B cell (primary cell): ENCODE measurements at regions of chr21 and their contacts with region 1.

Region 1: GRCh38 chr21:37563641-37564340 is 197.2 kb downstream of the DYRK1A start:
- DNase-seq: peak; percentile 94
- ATAC-seq: peak; percentile 92
- H3K4me3 ChIP-seq: peak overlapping the region; percentile 61 to 91 (median 82)
- H3K4me3 Mint-ChIP-seq: peak overlapping the region; percentile 97
- H3K27ac ChIP-seq: peak overlapping the region; percentile 70 to 88
- H3K27ac Mint-ChIP-seq: peak overlapping the region; percentile 97
- H3K4me1 ChIP-seq: peaks cover 10 to 19% of the 10 kb centered on the region in 2 donors
- H3K4me1 Mint-ChIP-seq: peaks cover 18% of the 10 kb centered on the region
- H3K27me3 ChIP-seq: no peaks in the 10 kb centered on the region
- H3K27me3 Mint-ChIP-seq: peaks cover 3% of the 10 kb centered on the region
- CTCF ChIP-seq: peak; percentile 61

Region 2: DNA sequence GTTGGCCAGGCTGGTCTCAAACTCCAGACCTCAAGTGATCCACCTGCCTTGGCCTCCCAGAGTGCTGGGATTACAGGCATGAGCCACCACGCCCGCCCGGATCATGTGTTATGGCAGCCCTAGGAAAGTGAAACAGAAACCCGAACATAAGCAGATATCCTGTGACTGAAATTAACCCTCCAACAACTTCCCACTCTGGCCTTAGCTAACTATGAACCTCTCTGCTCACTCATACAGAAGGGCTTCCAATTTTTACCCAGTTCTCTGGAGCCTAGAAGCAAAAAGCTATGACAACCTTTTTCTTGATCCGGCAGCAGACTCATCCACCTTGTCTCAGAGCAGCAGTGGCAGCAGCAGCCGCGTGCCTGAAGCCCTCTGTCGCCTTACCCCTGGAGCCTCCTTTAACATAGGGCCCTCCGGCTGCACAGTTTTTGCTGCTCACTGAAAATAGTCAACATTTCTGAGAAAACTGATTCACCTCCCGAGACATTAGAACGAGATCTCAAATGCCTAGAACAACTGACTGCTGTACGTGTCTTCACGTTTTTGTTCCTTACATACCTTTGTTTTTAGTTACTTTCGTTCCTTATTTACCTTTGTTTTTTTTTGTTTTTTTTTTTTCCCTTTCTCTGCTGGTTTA is 1484.7 kb before region 1 on chr21:
- CTCF ChIA-PET with region 1: no interaction called
- POLR2A ChIA-PET with region 1: no interaction called
- intact Hi-C with region 1: no loop called
- DNase-seq: peak; percentile 61
- ATAC-seq: peak; percentile 79
- H3K4me3 ChIP-seq: peak overlapping the region in 1 of 5 experiments; percentile 20
- H3K4me3 Mint-ChIP-seq: peak overlapping the region; percentile 64
- H3K27ac ChIP-seq: peak overlapping the region; percentile 35 to 51
- H3K27ac Mint-ChIP-seq: peak overlapping the region; percentile 90
- H3K4me1 ChIP-seq: peaks cover 26 to 29% of the 10 kb centered on the region in 2 donors
- H3K4me1 Mint-ChIP-seq: peaks cover 37% of the 10 kb centered on the region
- H3K27me3 ChIP-seq: no peaks in the 10 kb centered on the region
- H3K27me3 Mint-ChIP-seq: no peaks in the 10 kb centered on the region
- CTCF ChIP-seq: no peak

Region 3: GRCh38 chr21:37072988-37073416 is 490.8 kb before region 1 on chr21 and contains the starts of genes PIGP and TTC3:
- CTCF ChIA-PET with region 1: no interaction called
- POLR2A ChIA-PET with region 1: no interaction called
- intact Hi-C with region 1: loop called (anchors 2 kb)
- DNase-seq: peak; percentile 98
- ATAC-seq: peak; percentile 67
- H3K4me3 ChIP-seq: peak within 1 kb of the TSS; percentile 80 to 92 (median 86)
- H3K4me3 Mint-ChIP-seq: peak within 1 kb of the TSS; percentile 98
- H3K27ac ChIP-seq: peak within 1 kb of the TSS; percentile 98
- H3K27ac Mint-ChIP-seq: peak within 1 kb of the TSS; percentile 99
- H3K4me1 ChIP-seq: peaks cover 22 to 23% of the 10 kb centered on the region in 2 donors
- H3K4me1 Mint-ChIP-seq: peaks cover 46% of the 10 kb centered on the region
- H3K27me3 ChIP-seq: no peaks in the 10 kb centered on the region
- H3K27me3 Mint-ChIP-seq: no peaks in the 10 kb centered on the region
- CTCF ChIP-seq: no peak
- total RNA-seq, gene PIGP: 21.7 and 22.7 TPM in 2 replicates
- total RNA-seq, gene TTC3: 163 and 191 TPM in 2 replicates

Region 4: DNA sequence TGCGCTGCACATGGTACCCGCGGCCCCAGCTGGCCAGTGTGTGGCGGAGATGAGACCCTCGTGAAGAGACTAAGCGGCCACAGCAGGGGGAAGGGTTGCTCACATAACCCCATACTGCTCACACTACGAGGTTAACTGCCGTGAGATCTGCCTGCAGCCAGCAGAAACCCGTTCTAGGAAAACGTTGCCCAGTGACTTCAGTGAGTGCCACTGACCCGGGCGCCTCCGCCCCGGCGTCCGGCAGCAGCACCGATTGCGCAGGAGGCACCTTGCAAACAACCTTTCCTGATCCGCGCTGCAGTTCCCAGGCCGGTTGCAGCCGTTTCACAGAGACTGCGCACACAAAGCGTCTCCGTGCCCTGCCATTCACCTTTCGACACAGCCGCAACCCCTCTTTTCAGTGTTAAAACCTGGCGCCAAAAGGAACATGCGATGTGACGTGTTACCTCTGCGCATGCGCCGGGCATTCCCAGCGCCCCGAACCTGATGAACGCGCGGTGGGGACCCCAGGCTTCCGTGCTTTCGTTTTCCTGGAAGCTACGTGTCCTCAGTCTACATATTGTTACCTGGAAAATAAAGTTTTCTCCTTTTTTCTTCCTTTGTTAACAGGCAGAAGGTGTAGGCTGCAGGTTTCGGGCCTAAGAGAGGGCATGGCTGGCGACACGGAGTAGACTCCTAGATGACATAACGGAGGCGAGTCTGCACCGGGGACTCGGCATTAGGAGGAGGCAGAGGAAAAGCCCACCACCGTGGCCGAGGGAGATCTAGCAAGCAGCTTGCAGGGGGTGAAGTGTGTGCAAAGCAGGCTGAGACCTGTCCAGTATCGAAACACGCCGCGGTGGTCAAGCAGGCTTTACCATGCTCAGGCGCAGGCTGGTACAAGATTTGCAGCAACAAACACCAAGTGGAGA is 305.6 kb before region 1 on chr21:
- CTCF ChIA-PET with region 1: no interaction called
- POLR2A ChIA-PET with region 1: no interaction called
- intact Hi-C with region 1: loop called (anchors 2 kb)
- DNase-seq: peak; percentile 86
- ATAC-seq: peak; percentile 56
- H3K4me3 ChIP-seq: peak overlapping the region; percentile 59 to 85 (median 72)
- H3K4me3 Mint-ChIP-seq: peak overlapping the region; percentile 86
- H3K27ac ChIP-seq: peak overlapping the region; percentile 9 to 78
- H3K27ac Mint-ChIP-seq: peak overlapping the region; percentile 57
- H3K4me1 ChIP-seq: peaks cover 12 to 22% of the 10 kb centered on the region in 2 donors
- H3K4me1 Mint-ChIP-seq: peaks cover 31% of the 10 kb centered on the region
- H3K27me3 ChIP-seq: no peaks in the 10 kb centered on the region
- H3K27me3 Mint-ChIP-seq: no peaks in the 10 kb centered on the region
- CTCF ChIP-seq: no peak

Region 5: GRCh38 chr21:37509802-37510393 is 53.9 kb before region 1 on chr21:
- CTCF ChIA-PET with region 1: no interaction called
- POLR2A ChIA-PET with region 1: no interaction called
- intact Hi-C with region 1: loop called (anchors 10 kb)
- DNase-seq: no peak
- ATAC-seq: no peak
- H3K4me3 ChIP-seq: no peak overlapping the region
- H3K4me3 Mint-ChIP-seq: no peak overlapping the region
- H3K27ac ChIP-seq: no peak overlapping the region
- H3K27ac Mint-ChIP-seq: no peak overlapping the region
- H3K4me1 ChIP-seq: no peaks in the 10 kb centered on the region
- H3K4me1 Mint-ChIP-seq: peaks cover 19% of the 10 kb centered on the region
- H3K27me3 ChIP-seq: no peaks in the 10 kb centered on the region
- H3K27me3 Mint-ChIP-seq: no peaks in the 10 kb centered on the region
- CTCF ChIP-seq: no peak

Region 6: GRCh38 chr21:37711836-37712568 is 148.2 kb after region 1 on chr21:
- CTCF ChIA-PET with region 1: no interaction called
- POLR2A ChIA-PET with region 1: no interaction called
- intact Hi-C with region 1: no loop called
- DNase-seq: peak; percentile 35
- ATAC-seq: peak; percentile 56
- H3K4me3 ChIP-seq: no peak overlapping the region
- H3K4me3 Mint-ChIP-seq: no peak overlapping the region
- H3K27ac ChIP-seq: no peak overlapping the region
- H3K27ac Mint-ChIP-seq: no peak overlapping the region
- H3K4me1 ChIP-seq: no peaks in the 10 kb centered on the region
- H3K4me1 Mint-ChIP-seq: no peaks in the 10 kb centered on the region
- H3K27me3 ChIP-seq: peaks cover 0 to 6% (median 0%) of the 10 kb centered on the region in 4 experiments
- H3K27me3 Mint-ChIP-seq: peaks cover 19% of the 10 kb centered on the region
- CTCF ChIP-seq: peak; percentile 57